CD8-positive, alpha-beta T cell (primary cell): ENCODE measurements at regions of chr20 and their contacts with region 1.

Region 1: GRCh38 chr20:34069341-34070078 is 42.5 kb downstream of the EIF2S2 start:
- DNase-seq: peak; percentile 14 to 76 (median 59)
- ATAC-seq: peak; percentile 89
- H3K4me3 ChIP-seq: no peak overlapping the region
- H3K4me3 Mint-ChIP-seq: no peak overlapping the region
- H3K27ac ChIP-seq: peak overlapping the region in 1 of 2 experiments; percentile 14
- H3K27ac Mint-ChIP-seq: peak overlapping the region; percentile 33
- H3K4me1 ChIP-seq: peaks cover 12% of the 10 kb centered on the region
- H3K4me1 Mint-ChIP-seq: peaks cover 40% of the 10 kb centered on the region
- H3K27me3 ChIP-seq: no peaks in the 10 kb centered on the region
- H3K27me3 Mint-ChIP-seq: no peaks in the 10 kb centered on the region
- CTCF ChIP-seq: peak; percentile 72

Region 2: GRCh38 chr20:33791959-33792597 is 277.4 kb before region 1 on chr20:
- CTCF ChIA-PET with region 1: interaction called, 11 read pairs
- POLR2A ChIA-PET with region 1: no interaction called
- intact Hi-C with region 1: loop called (anchors 1 to 2 kb)
- DNase-seq: peak; percentile 19 to 73 (median 54)
- ATAC-seq: peak; percentile 71
- H3K4me3 ChIP-seq: no peak overlapping the region
- H3K4me3 Mint-ChIP-seq: no peak overlapping the region
- H3K27ac ChIP-seq: no peak overlapping the region
- H3K27ac Mint-ChIP-seq: no peak overlapping the region
- H3K4me1 ChIP-seq: no peaks in the 10 kb centered on the region
- H3K4me1 Mint-ChIP-seq: peaks cover 10% of the 10 kb centered on the region
- H3K27me3 ChIP-seq: no peaks in the 10 kb centered on the region
- H3K27me3 Mint-ChIP-seq: no peaks in the 10 kb centered on the region
- CTCF ChIP-seq: peak; percentile 82

Region 3: GRCh38 chr20:33915726-33916331 is 153.7 kb before region 1 on chr20:
- CTCF ChIA-PET with region 1: interaction called, 66 read pairs
- POLR2A ChIA-PET with region 1: interaction called, 4 read pairs
- intact Hi-C with region 1: loop called (anchors 1 kb)
- DNase-seq: peak; percentile 24 to 70 (median 57)
- ATAC-seq: peak; percentile 53
- H3K4me3 ChIP-seq: no peak overlapping the region
- H3K4me3 Mint-ChIP-seq: no peak overlapping the region
- H3K27ac ChIP-seq: no peak overlapping the region
- H3K27ac Mint-ChIP-seq: no peak overlapping the region
- H3K4me1 ChIP-seq: no peaks in the 10 kb centered on the region
- H3K4me1 Mint-ChIP-seq: peaks cover 12% of the 10 kb centered on the region
- H3K27me3 ChIP-seq: no peaks in the 10 kb centered on the region
- H3K27me3 Mint-ChIP-seq: peaks cover 1% of the 10 kb centered on the region
- CTCF ChIP-seq: peak; percentile 63

Region 4: DNA sequence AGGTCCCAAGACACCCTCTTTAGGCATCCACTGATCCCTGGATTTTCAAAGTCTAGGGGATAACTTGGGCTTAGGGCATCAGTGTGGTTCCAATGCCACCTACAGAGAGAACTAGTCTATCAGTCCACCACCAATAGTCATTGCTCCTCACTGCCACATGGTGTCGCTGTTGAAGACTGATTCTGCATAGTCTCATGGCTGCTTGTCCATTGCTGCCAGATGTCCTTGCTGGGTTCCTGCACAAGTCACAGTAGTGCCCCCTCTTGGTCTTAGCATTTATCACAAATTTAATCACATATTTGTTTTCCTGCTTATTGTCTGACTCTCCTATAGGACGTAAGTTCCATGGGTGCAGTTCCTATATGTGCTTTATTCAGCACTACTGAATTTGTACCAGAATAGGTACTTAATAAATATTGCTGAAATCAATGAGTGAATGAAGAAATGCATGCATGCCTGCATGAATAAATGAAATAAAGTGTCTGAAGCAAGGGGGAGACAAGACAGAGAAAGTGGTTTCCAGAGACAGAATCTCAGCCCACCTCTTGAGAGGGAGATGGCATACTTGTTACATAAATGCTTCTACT is 121.7 kb before region 1 on chr20:
- CTCF ChIA-PET with region 1: no interaction called
- POLR2A ChIA-PET with region 1: no interaction called
- intact Hi-C with region 1: loop called in 1 of 2 experiments (anchors 5 kb)
- DNase-seq: peak in 6 of 9 experiments; percentile 1 to 67 (median 40)
- ATAC-seq: peak; percentile 61
- H3K4me3 ChIP-seq: no peak overlapping the region
- H3K4me3 Mint-ChIP-seq: no peak overlapping the region
- H3K27ac ChIP-seq: no peak overlapping the region
- H3K27ac Mint-ChIP-seq: no peak overlapping the region
- H3K4me1 ChIP-seq: no peaks in the 10 kb centered on the region
- H3K4me1 Mint-ChIP-seq: no peaks in the 10 kb centered on the region
- H3K27me3 ChIP-seq: no peaks in the 10 kb centered on the region
- H3K27me3 Mint-ChIP-seq: peaks cover 8% of the 10 kb centered on the region
- CTCF ChIP-seq: peak; percentile 67

Region 5: GRCh38 chr20:34022154-34022838 is 47.2 kb before region 1 on chr20:
- CTCF ChIA-PET with region 1: interaction called, 7 read pairs
- POLR2A ChIA-PET with region 1: interaction called, 6 read pairs
- intact Hi-C with region 1: loop called in 1 of 2 experiments (anchors 1 kb)
- DNase-seq: peak in 2 of 9 experiments; percentile 28 to 47
- ATAC-seq: peak; percentile 52
- H3K4me3 ChIP-seq: no peak overlapping the region
- H3K4me3 Mint-ChIP-seq: no peak overlapping the region
- H3K27ac ChIP-seq: no peak overlapping the region
- H3K27ac Mint-ChIP-seq: peak overlapping the region; percentile 55
- H3K4me1 ChIP-seq: peaks cover 34% of the 10 kb centered on the region
- H3K4me1 Mint-ChIP-seq: peaks cover 85% of the 10 kb centered on the region
- H3K27me3 ChIP-seq: no peaks in the 10 kb centered on the region
- H3K27me3 Mint-ChIP-seq: no peaks in the 10 kb centered on the region
- CTCF ChIP-seq: peak; percentile 50

Region 6: DNA sequence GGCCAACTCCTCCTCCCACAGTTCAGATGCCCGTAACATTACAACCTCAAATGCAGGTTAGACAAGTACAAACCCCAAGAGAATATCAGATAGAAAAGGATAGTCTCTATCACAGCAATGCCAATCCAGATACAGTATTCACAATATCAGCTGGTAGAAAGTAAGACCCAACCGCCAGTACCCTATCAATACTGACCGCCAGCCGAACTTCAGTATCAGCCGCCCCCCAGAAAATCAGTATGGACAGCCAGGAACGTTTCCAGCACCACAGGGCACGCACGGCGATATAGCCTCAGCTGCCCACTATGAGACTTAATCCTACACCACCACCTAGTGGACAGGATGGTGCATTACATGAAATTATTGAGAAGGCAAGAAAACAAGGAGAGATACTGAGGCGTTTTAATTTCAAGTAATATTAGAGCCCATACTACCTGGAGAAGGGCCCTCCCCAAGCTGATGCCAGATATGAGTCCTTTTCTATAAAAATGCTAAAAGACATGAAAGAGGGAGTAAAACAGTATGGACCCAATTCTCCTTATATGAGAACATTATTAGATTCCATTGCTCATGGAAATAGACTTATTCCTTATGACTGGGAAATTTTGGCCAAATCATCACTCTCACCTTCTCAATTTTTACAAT is 60.1 kb after region 1 on chr20:
- CTCF ChIA-PET with region 1: interaction called, 7 read pairs
- POLR2A ChIA-PET with region 1: no interaction called
- intact Hi-C with region 1: loop called (anchors 1 kb)
- DNase-seq: peak in 8 of 9 experiments; percentile 21 to 83 (median 54)
- ATAC-seq: peak; percentile 99
- H3K4me3 ChIP-seq: no peak overlapping the region
- H3K4me3 Mint-ChIP-seq: peak overlapping the region; percentile 60
- H3K27ac ChIP-seq: no peak overlapping the region
- H3K27ac Mint-ChIP-seq: no peak overlapping the region
- H3K4me1 ChIP-seq: no peaks in the 10 kb centered on the region
- H3K4me1 Mint-ChIP-seq: peaks cover 4% of the 10 kb centered on the region
- H3K27me3 ChIP-seq: no peaks in the 10 kb centered on the region
- H3K27me3 Mint-ChIP-seq: no peaks in the 10 kb centered on the region
- CTCF ChIP-seq: peak; percentile 98